Activated naive CD4-positive, alpha-beta T cell treated with anti-CD3 and anti-CD28 coated beads for 36 hours (primary cell): ENCODE measurements at regions of chr22 and their contacts with region 1.

Region 1: DNA sequence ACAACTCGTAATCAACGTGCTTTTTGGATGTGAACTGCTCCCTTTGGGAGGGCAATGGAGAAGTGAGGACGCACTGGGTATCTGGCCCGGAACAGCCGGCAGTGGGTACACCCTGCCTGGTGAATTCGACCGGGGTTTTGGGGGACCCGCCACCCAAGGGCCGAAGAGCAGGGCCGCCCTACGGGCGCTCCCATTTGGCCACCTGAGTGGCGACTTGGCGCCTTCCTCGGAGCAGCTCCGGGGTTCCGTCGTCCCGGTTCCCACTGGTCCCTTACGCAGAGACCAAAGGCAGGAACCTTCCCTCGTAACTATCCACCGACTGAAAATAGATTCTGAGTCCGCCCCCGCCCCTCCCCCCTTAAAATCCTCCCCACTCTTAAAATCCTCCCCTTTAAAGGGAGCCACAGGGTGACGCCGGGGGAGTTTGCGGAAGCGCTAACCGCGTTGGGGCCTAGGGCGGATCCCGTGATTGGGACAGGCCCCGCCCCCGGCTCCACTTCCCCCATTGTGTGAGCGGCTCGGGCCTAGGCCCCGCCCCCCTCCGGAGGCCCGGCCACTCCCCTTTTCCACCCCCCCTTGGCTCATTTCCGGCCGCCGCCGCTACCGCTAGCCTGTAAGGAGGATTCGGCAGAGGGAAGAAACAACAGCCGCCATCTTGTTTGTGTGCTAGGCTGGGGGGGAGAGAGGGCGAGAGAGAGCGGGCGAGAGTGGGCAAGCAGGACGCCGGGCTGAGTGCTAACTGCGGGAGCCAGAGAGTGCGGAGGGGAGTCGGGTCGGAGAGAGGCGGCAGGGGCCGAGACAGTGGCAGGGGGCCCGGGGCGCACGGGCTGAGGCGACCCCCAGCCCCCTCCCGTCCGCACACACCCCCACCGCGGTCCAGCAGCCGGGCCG is 1.0 kb upstream of the EP300 start:
- DNase-seq: peak; percentile 99
- H3K4me3 Mint-ChIP-seq: peak overlapping the region; percentile 93
- H3K27ac Mint-ChIP-seq: peak overlapping the region; percentile 99
- H3K4me1 Mint-ChIP-seq: peaks cover 25% of the 10 kb centered on the region
- H3K27me3 Mint-ChIP-seq: no peaks in the 10 kb centered on the region

Region 2: DNA sequence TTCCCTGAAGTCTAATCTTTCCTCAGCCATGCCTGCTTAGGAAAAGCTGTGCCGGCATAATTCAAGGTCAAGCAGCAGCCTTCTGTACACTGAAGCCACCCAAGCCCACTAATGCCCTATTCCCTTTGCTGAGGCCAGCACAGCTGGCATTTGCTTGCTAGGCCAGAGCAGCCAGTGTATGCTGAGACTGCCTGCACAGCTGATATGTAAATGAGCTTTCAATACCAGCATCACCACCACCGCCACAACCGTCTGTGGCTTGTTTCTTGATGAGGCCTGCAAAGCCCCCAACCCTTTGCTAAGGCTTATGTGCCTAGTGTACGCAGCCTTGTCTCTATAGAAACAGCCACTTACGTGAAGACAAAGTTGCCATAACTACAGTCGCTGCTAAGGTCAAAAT is 969.9 kb before region 1 on chr22:
- CTCF ChIA-PET with region 1: no interaction called
- intact Hi-C with region 1: no loop called
- DNase-seq: no peak
- H3K4me3 Mint-ChIP-seq: no peak overlapping the region
- H3K27ac Mint-ChIP-seq: no peak overlapping the region
- H3K4me1 Mint-ChIP-seq: peaks cover 52% of the 10 kb centered on the region
- H3K27me3 Mint-ChIP-seq: no peaks in the 10 kb centered on the region

Region 3: DNA sequence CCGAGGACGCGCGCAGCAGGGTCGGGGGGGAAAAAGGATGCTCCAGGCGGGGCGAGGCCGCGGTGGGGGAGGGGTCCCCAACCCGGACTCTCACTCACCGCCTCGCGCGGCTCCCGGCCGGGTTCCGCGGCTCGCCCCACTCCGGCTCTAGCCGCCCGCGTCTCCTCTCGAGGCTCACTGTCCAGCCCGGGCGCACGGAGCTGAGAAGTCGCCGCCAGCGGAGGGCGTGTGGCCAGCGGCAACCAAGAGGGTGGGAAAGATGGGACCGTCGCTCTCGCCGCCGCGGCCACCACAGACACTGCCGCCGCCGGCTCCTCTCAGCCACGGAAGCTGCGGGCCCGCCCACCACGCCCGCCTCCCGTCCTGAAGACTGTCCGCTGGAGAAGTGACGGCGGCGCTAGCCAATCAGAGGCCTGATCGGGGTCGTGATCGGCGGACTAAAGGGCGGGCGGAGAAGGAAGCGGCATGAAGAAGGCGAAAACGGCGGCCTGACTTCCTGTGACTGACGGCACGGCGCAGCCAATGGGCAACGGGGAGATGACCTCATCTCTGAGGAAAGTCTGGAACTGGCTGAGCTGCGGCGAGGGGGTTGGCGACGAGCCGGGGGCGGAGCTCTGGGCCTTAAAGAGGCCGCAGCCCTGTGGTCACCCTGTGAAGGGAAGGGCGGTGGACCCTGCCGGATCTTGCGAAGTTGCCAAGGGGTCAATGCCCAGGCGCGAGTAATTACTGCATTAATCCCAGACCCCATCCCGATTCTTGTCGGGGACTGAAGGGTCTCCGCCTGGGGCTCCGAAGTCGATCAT is 454.8 kb before region 1 on chr22 and contains the start of gene MRTFA:
- CTCF ChIA-PET with region 1: no interaction called
- intact Hi-C with region 1: loop called (anchors 2 kb)
- DNase-seq: peak; percentile 100
- H3K4me3 Mint-ChIP-seq: peak within 1 kb of the TSS; percentile 87
- H3K27ac Mint-ChIP-seq: peak within 1 kb of the TSS; percentile 92
- H3K4me1 Mint-ChIP-seq: peaks cover 39% of the 10 kb centered on the region
- H3K27me3 Mint-ChIP-seq: no peaks in the 10 kb centered on the region
- total RNA-seq, gene MRTFA: 47.2 to 48.9 TPM

Region 4: DNA sequence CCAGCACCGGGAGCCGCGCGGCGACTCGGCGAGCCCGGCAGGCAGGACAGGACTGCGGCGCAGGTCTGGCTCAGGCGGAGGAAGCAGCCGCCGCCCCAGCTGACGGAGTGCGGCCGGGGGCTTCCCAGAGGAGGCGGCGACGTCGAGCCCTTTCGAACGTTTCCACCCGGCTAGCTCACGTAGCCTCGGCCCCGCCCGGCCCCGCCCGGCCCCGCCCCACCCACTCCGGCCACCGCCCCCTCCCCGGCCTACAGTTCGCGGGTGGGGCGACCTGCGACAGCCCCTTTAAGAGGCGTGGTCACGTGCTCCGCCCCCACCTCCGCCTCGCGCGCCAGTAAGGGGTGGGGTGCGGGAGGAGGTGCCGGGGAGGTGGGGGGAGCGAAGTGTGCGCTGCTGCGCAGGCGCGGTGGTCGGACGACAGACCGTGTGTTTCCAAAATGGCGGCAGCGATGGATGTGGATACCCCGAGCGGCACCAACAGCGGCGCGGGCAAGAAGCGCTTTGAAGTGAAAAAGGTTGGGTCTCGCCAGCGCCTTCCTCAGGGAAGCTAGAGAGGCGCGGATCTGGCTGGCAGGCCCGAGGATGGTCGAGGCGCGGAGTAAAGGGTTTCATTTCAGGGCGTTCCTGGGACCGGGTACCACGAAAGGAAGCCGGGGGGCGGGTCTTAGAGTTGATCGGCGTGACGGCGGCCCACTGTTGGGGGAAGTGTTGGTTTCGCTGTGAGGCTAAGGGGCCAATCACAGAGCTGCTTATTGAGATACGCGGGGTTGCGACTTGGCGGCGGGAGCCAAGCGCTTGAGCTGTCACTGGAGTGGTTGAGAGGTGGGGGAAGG is 140.2 kb before region 1 on chr22 and contains the start of gene RBX1:
- CTCF ChIA-PET with region 1: no interaction called
- intact Hi-C with region 1: loop called (anchors 1 kb)
- DNase-seq: peak; percentile 99
- H3K4me3 Mint-ChIP-seq: peak within 1 kb of the TSS; percentile 93
- H3K27ac Mint-ChIP-seq: peak within 1 kb of the TSS; percentile 98
- H3K4me1 Mint-ChIP-seq: peaks cover 23% of the 10 kb centered on the region
- H3K27me3 Mint-ChIP-seq: no peaks in the 10 kb centered on the region
- total RNA-seq, gene RBX1: 90.1 to 93.3 TPM

Region 5: DNA sequence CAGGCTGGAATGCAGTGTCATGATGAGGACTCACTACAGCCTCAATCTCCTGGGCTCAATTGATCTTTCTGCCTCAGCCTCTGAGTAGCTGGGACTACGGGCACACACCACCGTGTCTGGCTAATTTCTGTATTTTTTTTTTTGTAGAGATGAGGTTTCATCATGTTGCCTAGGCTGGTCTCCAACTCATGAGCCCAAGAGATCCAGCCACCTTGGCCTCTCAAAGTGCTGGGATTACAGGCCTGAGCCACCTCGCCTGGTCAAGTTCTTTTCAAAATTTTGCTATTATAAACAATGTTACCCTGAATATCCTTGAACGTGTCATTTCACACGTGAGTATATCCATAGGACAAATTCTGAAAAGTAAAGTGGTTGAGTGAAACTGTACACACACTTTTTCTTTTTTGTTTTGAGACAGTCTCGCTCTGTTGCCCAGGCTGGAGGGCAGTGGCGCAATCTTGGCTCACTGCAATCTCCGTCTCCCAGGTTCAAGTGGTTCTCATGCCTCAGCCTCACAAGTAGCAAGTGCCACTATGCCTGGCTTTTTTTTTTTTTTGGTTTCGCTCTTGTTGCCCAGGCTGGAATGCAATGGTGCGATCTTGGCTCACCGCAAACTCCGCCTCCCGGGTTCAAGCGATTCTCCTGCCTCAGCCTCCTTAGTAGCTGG is 20.6 kb before region 1 on chr22:
- CTCF ChIA-PET with region 1: no interaction called
- intact Hi-C with region 1: loop called (anchors 1 kb)
- DNase-seq: no peak
- H3K4me3 Mint-ChIP-seq: no peak overlapping the region
- H3K27ac Mint-ChIP-seq: no peak overlapping the region
- H3K4me1 Mint-ChIP-seq: peaks cover 10% of the 10 kb centered on the region
- H3K27me3 Mint-ChIP-seq: no peaks in the 10 kb centered on the region

Region 6: DNA sequence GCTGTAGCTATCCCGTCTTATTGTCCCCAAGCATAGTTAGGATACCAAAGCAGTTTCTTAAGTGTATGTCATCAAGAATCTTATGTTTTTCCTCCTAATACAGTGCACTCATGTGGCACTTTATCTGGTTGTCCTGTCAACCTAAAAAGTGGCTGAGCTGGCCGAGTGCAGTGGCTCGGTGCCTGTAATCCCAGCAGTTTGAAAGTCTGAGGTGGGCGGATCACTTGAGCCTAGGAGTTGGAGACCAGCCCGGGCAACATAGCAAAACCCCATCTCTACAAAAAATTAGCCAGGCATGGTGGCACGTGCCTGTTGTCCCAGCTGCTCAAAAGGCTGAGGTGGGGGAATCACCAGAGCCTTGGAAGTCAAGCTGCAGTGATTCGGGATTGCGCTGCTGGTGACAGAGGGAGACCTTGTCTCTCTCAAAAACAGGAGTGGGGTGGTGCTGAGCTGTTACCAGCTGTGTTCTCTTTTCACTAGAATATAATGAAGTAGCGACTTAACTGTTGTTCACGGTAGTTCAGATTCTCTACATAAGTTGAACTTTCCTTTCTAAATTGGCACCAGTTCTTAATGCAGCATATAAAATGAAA is 49.1 kb after region 1 on chr22:
- CTCF ChIA-PET with region 1: no interaction called
- intact Hi-C with region 1: no loop called
- DNase-seq: no peak
- H3K4me3 Mint-ChIP-seq: no peak overlapping the region
- H3K27ac Mint-ChIP-seq: no peak overlapping the region
- H3K4me1 Mint-ChIP-seq: no peaks in the 10 kb centered on the region
- H3K27me3 Mint-ChIP-seq: no peaks in the 10 kb centered on the region

Region 7: DNA sequence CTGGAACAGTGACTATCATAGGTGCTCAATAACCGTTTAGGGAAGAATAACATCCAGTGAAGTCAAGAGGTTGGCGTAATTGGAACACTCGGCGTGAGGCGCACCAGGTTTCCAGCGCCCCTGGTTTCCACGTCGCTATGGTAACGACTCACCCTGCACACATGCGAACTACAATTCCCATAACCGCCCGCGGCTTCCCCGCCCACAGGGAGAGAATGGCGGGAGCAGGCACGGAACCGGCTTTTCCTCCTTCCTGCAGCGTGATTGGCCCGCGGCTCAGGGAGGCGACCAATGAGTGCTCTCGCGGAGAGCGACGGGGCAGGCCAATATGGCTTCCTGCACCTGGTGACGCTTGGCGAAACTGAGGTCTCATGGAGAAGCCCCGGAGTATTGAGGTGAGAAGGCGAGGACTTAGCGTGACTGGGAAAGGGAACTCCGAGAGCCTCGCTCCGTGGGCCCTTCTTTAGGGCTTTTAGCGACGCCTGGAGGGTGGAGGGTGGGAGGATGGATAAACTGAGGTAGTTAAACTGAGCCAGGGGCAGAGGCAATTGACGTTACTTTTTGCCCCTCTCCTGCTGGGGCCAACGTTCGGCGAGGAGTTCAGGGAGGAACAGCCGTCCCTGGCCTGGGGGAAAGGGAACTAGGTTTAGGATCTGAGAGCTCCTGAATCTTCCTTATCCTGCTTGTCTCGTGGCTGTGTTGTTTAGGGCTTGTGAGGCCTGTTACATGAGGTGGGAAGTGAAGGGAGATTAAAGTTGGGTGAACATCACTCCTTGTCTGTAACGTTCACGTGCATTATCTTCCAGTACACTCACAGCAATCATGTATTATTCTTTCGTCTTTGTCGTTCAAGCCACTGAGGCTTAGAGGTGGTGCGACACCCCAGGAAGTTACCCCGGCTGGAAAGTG is 113.9 kb after region 1 on chr22 and contains the start of gene L3MBTL2:
- CTCF ChIA-PET with region 1: no interaction called
- intact Hi-C with region 1: loop called (anchors 1 kb)
- DNase-seq: peak; percentile 99
- H3K4me3 Mint-ChIP-seq: peak within 1 kb of the TSS; percentile 88
- H3K27ac Mint-ChIP-seq: peak within 1 kb of the TSS; percentile 86
- H3K4me1 Mint-ChIP-seq: peaks cover 33% of the 10 kb centered on the region
- H3K27me3 Mint-ChIP-seq: no peaks in the 10 kb centered on the region
- total RNA-seq, gene L3MBTL2: 19.4 to 22.3 TPM

Region 8: GRCh38 chr22:41237707-41238569 is 146.6 kb after region 1 on chr22:
- CTCF ChIA-PET with region 1: interaction called, 6 read pairs
- intact Hi-C with region 1: loop called (anchors 1 kb)
- DNase-seq: peak; percentile 91
- H3K4me3 Mint-ChIP-seq: peak overlapping the region; percentile 45
- H3K27ac Mint-ChIP-seq: no peak overlapping the region
- H3K4me1 Mint-ChIP-seq: peaks cover 9% of the 10 kb centered on the region
- H3K27me3 Mint-ChIP-seq: no peaks in the 10 kb centered on the region

Region 9: DNA sequence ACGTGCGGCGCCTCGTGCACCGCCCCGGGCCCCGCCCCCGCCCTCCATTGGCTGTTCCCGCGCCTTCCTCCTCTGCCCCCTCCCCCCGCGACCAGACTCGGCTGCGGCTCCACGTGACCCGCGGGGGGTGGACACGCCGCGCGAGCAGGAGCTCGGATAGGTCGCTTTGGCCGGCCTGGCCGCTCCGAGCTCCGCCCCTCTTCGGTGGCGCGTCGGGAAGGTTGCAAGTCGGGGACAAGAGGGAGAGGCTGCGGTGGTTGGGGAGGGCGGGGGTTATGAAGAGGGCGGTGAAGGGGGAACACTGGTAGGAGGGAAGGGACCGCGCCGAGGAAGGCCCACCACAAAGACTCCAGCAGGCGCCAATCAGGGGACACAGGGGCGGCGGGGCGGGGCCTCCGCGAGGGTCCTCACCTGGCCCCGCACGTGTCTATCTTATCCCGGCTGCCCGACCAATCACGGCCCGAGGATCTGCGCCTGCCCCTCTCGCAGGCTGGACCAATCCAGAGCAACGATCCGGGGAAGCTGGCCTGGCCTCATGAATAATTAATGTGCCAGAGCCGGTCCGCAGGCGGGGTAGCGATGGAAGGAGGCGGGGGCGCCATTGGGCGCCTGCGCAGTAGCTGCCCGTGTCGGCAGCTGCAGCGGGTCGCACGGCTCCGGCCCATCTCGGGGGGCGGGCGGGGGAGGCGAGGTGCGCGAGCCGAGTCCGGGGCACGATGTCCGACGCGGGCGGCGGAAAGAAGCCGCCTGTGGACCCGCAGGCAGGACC is 290.1 kb after region 1 on chr22 and contains the start of gene TEF:
- CTCF ChIA-PET with region 1: no interaction called
- intact Hi-C with region 1: loop called (anchors 2 kb)
- DNase-seq: peak; percentile 98
- H3K4me3 Mint-ChIP-seq: peak within 1 kb of the TSS; percentile 87
- H3K27ac Mint-ChIP-seq: peak within 1 kb of the TSS; percentile 95
- H3K4me1 Mint-ChIP-seq: peaks cover 13% of the 10 kb centered on the region
- H3K27me3 Mint-ChIP-seq: no peaks in the 10 kb centered on the region
- total RNA-seq, gene TEF: 1.7 to 1.9 TPM

Region 10: GRCh38 chr22:41742916-41743315 is 651.5 kb after region 1 on chr22:
- CTCF ChIA-PET with region 1: no interaction called
- intact Hi-C with region 1: no loop called
- DNase-seq: no peak
- H3K4me3 Mint-ChIP-seq: no peak overlapping the region
- H3K27ac Mint-ChIP-seq: no peak overlapping the region
- H3K4me1 Mint-ChIP-seq: peaks cover 6% of the 10 kb centered on the region
- H3K27me3 Mint-ChIP-seq: no peaks in the 10 kb centered on the region